PC-3 (cell line): ENCODE measurements at regions of chr3 and their contacts with region 1.

Region 1: DNA sequence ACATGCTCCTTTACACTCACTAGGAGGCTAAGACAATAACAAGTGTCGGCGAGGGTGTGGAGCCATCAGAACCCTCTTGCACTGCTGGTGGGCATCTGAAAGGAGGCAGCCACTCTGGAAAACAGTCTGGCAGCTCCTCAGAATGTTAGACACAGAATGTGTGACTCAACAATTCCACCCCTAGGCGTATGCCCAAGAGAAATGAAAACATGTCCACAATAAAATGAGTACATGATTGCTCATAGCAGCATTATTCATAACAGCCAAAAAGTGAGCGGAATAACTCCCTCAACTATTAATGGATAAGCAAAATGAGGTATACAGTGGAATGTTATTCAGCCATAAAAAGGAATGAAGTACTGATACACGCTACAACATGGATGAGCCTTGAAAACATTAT is 57.8 kb downstream of the WNT7A start:
- DNase-seq: peak; percentile 98
- ATAC-seq: peak; percentile 82
- H3K4me3 ChIP-seq: 0 out of 2 replicates have a peak overlapping the region, but pooled peaks have one; percentile 5
- H3K27ac ChIP-seq: peak overlapping the region; percentile 53
- H3K4me1 ChIP-seq: peaks cover 52% of the 10 kb centered on the region
- H3K27me3 ChIP-seq: no peaks in the 10 kb centered on the region
- CTCF ChIP-seq: no peak

Region 2: DNA sequence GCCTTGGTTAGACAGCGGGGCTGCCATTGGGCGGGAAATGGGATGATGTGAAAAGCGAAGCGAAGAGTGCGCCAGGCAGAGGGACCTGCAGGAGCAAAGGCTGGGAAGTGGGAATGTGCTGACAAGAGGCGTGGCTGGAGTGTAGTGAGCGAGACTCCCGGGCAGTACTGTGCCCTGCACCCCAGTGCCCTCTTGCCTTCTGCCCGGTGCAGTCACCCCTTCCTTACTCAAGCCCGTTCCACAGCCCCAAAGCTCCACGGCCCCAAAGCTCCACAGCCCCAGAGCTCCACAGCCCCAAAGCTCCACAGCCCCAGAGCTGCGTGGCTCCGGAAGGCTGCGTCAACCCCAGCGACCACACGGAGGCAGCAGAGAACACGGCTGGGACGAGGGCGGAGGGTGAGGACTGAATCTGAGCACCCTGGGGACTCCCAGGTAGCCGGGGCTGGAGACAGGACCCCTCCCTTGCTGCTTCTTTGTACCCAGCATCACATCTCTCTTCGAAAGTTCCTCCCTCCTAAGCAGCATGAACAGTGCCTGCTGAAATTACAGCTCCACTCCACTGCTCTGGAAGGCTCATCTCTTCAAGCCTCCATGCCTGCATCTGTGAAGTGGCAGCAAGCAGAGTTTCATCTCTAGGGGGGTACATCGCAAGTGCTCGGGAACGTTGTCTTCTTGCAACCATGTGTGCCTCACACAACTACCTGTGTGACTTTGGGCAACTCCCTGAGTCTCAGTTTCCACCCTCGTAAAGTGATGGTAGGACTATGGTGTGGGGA is 164.2 kb before region 1 on chr3:
- CTCF ChIA-PET with region 1: no interaction called
- POLR2A ChIA-PET with region 1: no interaction called
- intact Hi-C with region 1: loop called (anchors 2 kb)
- DNase-seq: peak; percentile 81
- ATAC-seq: peak; percentile 81
- H3K4me3 ChIP-seq: no peak overlapping the region
- H3K27ac ChIP-seq: no peak overlapping the region
- H3K4me1 ChIP-seq: peaks cover 5% of the 10 kb centered on the region; the same call in 1 of the 2 replicates
- H3K27me3 ChIP-seq: no peaks in the 10 kb centered on the region
- CTCF ChIP-seq: peak; percentile 94

Region 3: DNA sequence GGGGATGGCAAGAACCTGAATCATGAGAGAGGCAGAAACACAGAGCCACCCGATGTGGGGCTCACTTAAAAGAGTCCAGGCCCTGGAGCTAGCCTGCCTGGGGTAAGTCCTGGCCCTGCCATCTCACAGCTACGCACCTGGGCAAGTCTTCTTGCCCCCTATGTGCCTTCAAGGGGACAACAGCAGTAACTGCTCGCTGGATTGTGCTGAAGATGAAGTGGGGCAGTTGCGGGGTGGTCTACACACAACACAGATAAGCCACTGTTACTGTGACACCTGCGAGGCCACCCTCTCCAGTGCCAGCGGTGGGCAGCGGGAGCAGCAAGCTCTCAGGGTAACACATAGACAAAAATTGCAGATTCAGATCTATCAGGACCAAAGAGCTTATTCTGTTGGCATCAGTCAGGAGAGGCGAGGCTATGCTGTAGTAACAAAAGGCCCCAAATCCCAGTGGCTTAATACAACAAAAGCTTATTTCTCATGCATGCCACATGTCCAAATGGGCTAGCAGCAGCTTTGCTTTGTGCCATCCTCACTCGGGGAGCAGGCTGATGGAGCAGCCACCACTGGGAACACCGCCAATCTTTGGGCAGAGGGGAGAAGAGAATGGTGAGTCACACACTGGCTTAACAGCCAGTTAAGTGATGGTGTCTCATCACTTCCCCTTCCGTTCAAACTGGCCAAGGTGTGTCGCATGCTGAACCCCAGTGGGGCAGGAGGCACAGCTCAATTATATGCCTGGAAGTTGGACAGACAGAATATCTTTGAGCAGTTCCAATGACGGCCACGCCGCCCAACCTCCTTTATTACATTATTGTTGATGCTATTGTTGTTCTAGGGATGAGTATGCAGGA is 20.5 kb before region 1 on chr3:
- CTCF ChIA-PET with region 1: no interaction called
- POLR2A ChIA-PET with region 1: no interaction called
- intact Hi-C with region 1: loop called (anchors 1 kb)
- DNase-seq: peak; percentile 99
- ATAC-seq: peak; percentile 95
- H3K4me3 ChIP-seq: no peak overlapping the region
- H3K27ac ChIP-seq: peak overlapping the region; percentile 88
- H3K4me1 ChIP-seq: peaks cover 20% of the 10 kb centered on the region
- H3K27me3 ChIP-seq: no peaks in the 10 kb centered on the region
- CTCF ChIP-seq: no peak

Region 4: DNA sequence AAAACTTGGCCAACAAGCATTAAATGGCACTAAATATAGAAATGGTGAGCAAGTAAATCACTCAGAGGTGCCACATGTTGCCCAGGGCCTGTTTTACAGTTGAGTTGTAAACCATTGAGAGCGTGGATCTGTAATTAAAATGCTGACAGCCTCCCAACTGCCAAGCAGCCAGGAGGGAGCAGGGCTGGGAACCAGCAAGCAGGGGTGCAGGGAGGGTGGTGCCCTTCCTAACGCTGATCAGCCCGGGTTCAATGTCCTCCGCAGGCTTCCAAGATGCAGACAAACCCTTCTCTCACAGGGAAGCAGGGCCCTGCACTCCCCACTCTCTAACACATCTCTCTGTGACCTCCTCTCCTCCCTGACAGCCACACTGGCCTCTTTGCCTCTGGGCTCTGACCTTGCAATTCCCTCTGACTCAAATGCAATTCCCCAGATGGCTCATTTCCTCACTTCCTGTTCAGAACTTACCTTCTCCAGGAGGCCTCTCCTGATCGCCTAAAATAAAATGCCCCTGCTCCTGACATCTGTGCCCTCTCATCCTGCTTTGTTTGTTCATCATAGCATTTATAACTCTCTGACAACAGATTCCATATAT is 17.8 kb after region 1 on chr3:
- CTCF ChIA-PET with region 1: no interaction called
- POLR2A ChIA-PET with region 1: no interaction called
- intact Hi-C with region 1: loop called (anchors 2 kb)
- DNase-seq: peak; percentile 64
- ATAC-seq: peak; percentile 49
- H3K4me3 ChIP-seq: no peak overlapping the region
- H3K27ac ChIP-seq: peak overlapping the region; percentile 68
- H3K4me1 ChIP-seq: peaks cover 31% of the 10 kb centered on the region
- H3K27me3 ChIP-seq: no peaks in the 10 kb centered on the region
- CTCF ChIP-seq: no peak

Region 5: GRCh38 chr3:13850158-13850945 is 28.3 kb after region 1 on chr3:
- CTCF ChIA-PET with region 1: interaction called, 3 read pairs
- POLR2A ChIA-PET with region 1: interaction called, 5 read pairs
- intact Hi-C with region 1: loop called (anchors 1 kb)
- DNase-seq: peak; percentile 98
- ATAC-seq: peak; percentile 79
- H3K4me3 ChIP-seq: no peak overlapping the region
- H3K27ac ChIP-seq: peak overlapping the region; percentile 84
- H3K4me1 ChIP-seq: peaks cover 61% of the 10 kb centered on the region
- H3K27me3 ChIP-seq: no peaks in the 10 kb centered on the region
- CTCF ChIP-seq: no peak

Region 6: GRCh38 chr3:13879655-13880204 is 57.7 kb after region 1 on chr3 and contains the start of gene WNT7A:
- CTCF ChIA-PET with region 1: interaction called, 7 read pairs
- POLR2A ChIA-PET with region 1: no interaction called
- intact Hi-C with region 1: loop called (anchors 5 kb)
- DNase-seq: peak; percentile 26
- ATAC-seq: peak; percentile 25
- H3K4me3 ChIP-seq: peak within 1 kb of the TSS; percentile 87
- H3K27ac ChIP-seq: no peak within 1 kb of the TSS
- H3K4me1 ChIP-seq: no peaks in the 10 kb centered on the region
- H3K27me3 ChIP-seq: no peaks in the 10 kb centered on the region
- CTCF ChIP-seq: no peak; the same call in 1 of the 2 replicates
- total RNA-seq, gene WNT7A: 16.2 and 18.1 TPM in 2 replicates

Region 7: DNA sequence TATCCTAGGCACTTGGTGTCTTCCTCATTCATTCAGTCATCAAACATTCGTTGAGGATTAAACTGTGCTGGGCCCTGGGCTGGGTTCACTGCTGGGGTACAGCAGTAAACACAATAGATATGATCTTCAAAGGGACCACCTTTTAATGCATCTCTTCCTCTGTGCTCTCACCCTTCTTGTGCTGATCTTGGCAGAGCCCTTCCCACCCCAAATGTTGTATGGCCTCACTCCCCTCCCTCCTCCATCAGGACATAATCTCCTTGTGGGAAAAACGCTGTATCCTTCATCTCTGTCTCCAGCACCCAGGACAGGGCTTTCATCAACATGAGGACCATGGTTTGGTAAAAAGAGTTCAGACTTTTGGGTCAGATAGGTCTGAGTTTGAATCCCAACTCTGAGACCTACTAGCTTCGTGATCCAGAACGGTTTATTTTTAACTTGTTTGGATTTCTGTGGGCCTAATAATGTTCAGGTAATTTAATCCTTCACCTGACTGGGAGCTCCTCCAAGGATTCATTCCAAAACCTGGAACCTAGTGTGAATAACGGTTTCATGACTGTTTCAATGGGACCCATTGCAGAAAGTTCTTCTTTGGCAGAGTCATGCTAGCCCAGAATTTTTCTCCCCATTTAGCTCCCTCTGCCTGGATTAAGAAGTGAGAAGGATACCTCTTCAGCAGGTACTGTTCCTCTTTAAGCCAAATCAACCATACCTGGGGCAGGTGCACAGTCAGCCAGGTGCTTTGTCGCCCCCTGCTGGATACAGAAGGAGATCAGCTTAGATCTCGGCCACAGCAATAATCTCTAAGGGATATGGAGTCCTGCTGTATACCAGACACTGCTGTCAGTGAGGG is 63.0 kb after region 1 on chr3:
- CTCF ChIA-PET with region 1: interaction called, 7 read pairs
- POLR2A ChIA-PET with region 1: no interaction called
- intact Hi-C with region 1: loop called (anchors 1 kb)
- DNase-seq: peak; percentile 86
- ATAC-seq: peak; percentile 81
- H3K4me3 ChIP-seq: no peak overlapping the region
- H3K27ac ChIP-seq: no peak overlapping the region
- H3K4me1 ChIP-seq: no peaks in the 10 kb centered on the region
- H3K27me3 ChIP-seq: no peaks in the 10 kb centered on the region
- CTCF ChIP-seq: peak; percentile 96

Region 8: DNA sequence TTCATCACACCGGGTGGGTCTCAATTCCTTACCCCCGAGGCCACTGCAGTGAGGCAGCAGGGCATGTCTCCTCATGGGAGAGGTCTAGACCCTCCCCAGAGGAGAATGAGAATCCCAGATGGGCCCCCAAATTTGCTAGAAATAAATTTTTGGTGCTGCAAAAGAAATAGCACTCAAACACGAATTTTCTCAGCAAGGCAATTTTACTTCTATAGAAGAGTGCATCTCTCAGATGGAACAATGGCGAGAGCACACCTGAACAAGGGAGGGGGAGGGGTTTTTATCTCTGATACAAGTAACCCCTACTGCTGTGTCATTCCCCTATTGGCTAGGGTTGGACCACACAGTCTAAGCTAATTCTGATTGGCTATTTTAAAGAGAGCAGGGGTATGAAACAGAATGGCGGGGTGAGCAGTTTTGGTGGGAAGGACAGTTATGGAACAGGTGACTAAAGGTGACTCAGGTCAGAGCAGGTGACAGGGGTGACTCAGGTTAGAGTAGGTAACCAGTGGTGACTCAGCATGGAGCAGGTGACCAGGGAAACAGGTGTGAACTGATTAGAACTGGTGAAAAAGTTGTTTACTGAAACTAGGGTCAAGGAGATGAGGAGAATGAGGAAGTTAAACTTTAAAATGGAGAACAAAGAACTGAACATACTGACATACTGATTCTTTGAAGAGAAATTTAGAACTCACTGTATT is 150.8 kb after region 1 on chr3:
- CTCF ChIA-PET with region 1: no interaction called
- POLR2A ChIA-PET with region 1: no interaction called
- intact Hi-C with region 1: no loop called
- DNase-seq: no peak
- ATAC-seq: no peak
- H3K4me3 ChIP-seq: no peak overlapping the region; the same call in 1 of the 2 replicates
- H3K27ac ChIP-seq: no peak overlapping the region
- H3K4me1 ChIP-seq: no peaks in the 10 kb centered on the region
- H3K27me3 ChIP-seq: no peaks in the 10 kb centered on the region
- CTCF ChIP-seq: no peak

Region 9: GRCh38 chr3:14352002-14352627 is 530.1 kb after region 1 on chr3:
- CTCF ChIA-PET with region 1: no interaction called
- POLR2A ChIA-PET with region 1: no interaction called
- intact Hi-C with region 1: no loop called
- DNase-seq: peak; percentile 26
- ATAC-seq: no peak; the same call in 1 of the 2 replicates
- H3K4me3 ChIP-seq: no peak overlapping the region
- H3K27ac ChIP-seq: no peak overlapping the region
- H3K4me1 ChIP-seq: no peaks in the 10 kb centered on the region
- H3K27me3 ChIP-seq: no peaks in the 10 kb centered on the region
- CTCF ChIP-seq: no peak